ENCODE measurements at regions of chr19 and their contacts with region 1.

Region 1: GRCh38 chr19:56105090-56105701 is 15.9 kb downstream of the ZNF787 start:
- DNase-seq: peak in 4 of 5 donors; percentile 25 to 40 (median 34)
- H3K4me3 ChIP-seq: no peak overlapping the region
- H3K4me3 Mint-ChIP-seq: peak overlapping the region in 1 of 8 donors; percentile 8
- H3K27ac ChIP-seq: no peak overlapping the region
- H3K27ac Mint-ChIP-seq: peak overlapping the region in 3 of 7 donors; percentile 13 to 42 (median 41)
- H3K4me1 ChIP-seq: peaks cover 9% of the 10 kb centered on the region
- H3K4me1 Mint-ChIP-seq: peaks cover 12 to 46% (median 17%) of the 10 kb centered on the region in 4 donors
- H3K27me3 ChIP-seq: no peaks in the 10 kb centered on the region
- H3K27me3 Mint-ChIP-seq: no peaks in the 10 kb centered on the region

Region 2: DNA sequence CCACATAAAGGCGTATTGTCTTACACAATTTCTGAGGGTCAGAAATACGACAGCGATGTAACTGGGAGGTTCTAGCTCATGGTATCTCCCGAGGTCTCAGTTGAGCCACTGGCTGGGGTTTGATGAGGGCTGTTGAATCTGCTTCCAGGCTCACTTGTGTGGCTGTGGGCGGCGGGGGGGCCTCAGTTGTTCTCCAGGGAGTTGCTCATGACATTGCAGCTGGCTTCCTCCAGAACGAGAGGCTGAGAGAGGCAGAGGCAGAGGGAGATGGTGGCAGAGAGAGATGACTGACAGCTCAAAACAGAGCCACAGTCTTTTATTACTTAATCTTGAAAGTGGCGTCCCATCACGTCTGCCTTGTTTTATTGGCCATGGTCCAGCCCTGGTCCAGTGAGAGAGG is 124.8 kb before region 1 on chr19:
- CTCF ChIA-PET with region 1: no interaction called
- POLR2A ChIA-PET with region 1: no interaction called
- intact Hi-C with region 1: no loop called
- DNase-seq: no peak
- H3K4me3 ChIP-seq: no peak overlapping the region
- H3K4me3 Mint-ChIP-seq: no peak overlapping the region
- H3K27ac ChIP-seq: no peak overlapping the region
- H3K27ac Mint-ChIP-seq: no peak overlapping the region
- H3K4me1 ChIP-seq: no peaks in the 10 kb centered on the region
- H3K4me1 Mint-ChIP-seq: no peaks in the 10 kb centered on the region
- H3K27me3 ChIP-seq: no peaks in the 10 kb centered on the region
- H3K27me3 Mint-ChIP-seq: peaks cover 2 to 4% of the 10 kb centered on the region in 2 donors

Region 3: DNA sequence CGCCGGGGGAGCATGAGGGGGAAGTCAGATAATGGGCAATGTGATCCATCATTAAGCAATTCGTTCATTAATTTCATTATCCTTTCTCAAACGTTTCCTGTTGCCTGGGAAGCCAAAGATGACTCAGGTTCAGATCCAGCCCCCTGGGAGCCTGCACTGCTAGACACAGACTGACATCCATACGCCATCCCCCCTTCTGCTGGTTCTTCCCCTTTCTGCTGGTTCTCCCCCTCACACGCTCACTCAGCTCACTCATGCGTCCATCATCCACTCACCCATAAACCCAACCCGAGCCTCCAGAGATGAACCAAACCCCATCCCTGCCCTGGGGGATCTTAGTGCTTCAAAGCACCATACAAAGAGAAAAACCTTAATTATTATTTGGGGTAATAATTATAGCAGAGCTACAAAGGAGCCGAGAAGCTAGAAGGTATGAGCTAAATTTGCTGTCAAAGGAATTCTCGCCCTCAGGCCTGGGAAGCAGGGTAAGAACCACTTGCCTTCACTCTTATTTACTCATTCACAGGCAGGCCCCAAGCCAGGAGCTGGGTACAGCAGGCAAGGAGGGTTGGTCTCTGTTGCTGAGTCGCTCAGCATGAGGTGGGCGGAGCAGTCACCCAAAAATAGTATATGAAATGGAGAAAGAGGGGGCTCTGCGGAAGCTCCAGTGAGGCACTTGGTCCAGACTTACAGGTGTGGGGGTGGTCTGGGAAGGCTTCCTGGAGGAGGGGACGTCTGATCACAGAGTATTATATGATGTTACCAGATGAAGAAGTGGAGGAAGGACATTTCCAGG is 28.9 kb after region 1 on chr19:
- CTCF ChIA-PET with region 1: no interaction called
- POLR2A ChIA-PET with region 1: no interaction called
- intact Hi-C with region 1: no loop called
- DNase-seq: no peak
- H3K4me3 ChIP-seq: no peak overlapping the region
- H3K4me3 Mint-ChIP-seq: peak overlapping the region in 1 of 8 donors; percentile 6
- H3K27ac ChIP-seq: no peak overlapping the region
- H3K27ac Mint-ChIP-seq: peak overlapping the region in 1 of 7 donors; percentile 41
- H3K4me1 ChIP-seq: no peaks in the 10 kb centered on the region
- H3K4me1 Mint-ChIP-seq: peaks cover 0 to under 1% (median under 1%) of the 10 kb centered on the region in 4 donors
- H3K27me3 ChIP-seq: no peaks in the 10 kb centered on the region
- H3K27me3 Mint-ChIP-seq: no peaks in the 10 kb centered on the region

Region 4: GRCh38 chr19:56170261-56170660 is 65.1 kb after region 1 on chr19:
- CTCF ChIA-PET with region 1: interaction called, 7 read pairs
- POLR2A ChIA-PET with region 1: no interaction called
- intact Hi-C with region 1: loop called (anchors 1 kb)
- DNase-seq: no peak
- H3K4me3 ChIP-seq: no peak overlapping the region
- H3K4me3 Mint-ChIP-seq: no peak overlapping the region
- H3K27ac ChIP-seq: no peak overlapping the region
- H3K27ac Mint-ChIP-seq: peak overlapping the region in 1 of 7 donors; percentile 9
- H3K4me1 ChIP-seq: no peaks in the 10 kb centered on the region
- H3K4me1 Mint-ChIP-seq: peaks cover 0 to 5% (median 3%) of the 10 kb centered on the region in 4 donors
- H3K27me3 ChIP-seq: no peaks in the 10 kb centered on the region
- H3K27me3 Mint-ChIP-seq: peaks cover 9 to 12% of the 10 kb centered on the region in 2 donors

Region 5: GRCh38 chr19:56199686-56200085 is 94.5 kb after region 1 on chr19:
- CTCF ChIA-PET with region 1: no interaction called
- POLR2A ChIA-PET with region 1: no interaction called
- intact Hi-C with region 1: no loop called
- DNase-seq: no peak
- H3K4me3 ChIP-seq: no peak overlapping the region
- H3K4me3 Mint-ChIP-seq: no peak overlapping the region
- H3K27ac ChIP-seq: no peak overlapping the region
- H3K27ac Mint-ChIP-seq: no peak overlapping the region
- H3K4me1 ChIP-seq: no peaks in the 10 kb centered on the region
- H3K4me1 Mint-ChIP-seq: no peaks in the 10 kb centered on the region
- H3K27me3 ChIP-seq: no peaks in the 10 kb centered on the region
- H3K27me3 Mint-ChIP-seq: peaks cover 4 to 8% of the 10 kb centered on the region in 2 donors

Measured in CD4-positive, alpha-beta memory T cell (primary cell).